PC-9 (cell line): ENCODE measurements at regions of chr6 and their contacts with region 1.

Region 1: GRCh38 chr6:21587179-21587924 is 6.2 kb upstream of the SOX4 start:
- DNase-seq: peak; percentile 66 to 67
- H3K4me3 ChIP-seq: peak overlapping the region; percentile 97
- H3K27ac ChIP-seq: peak overlapping the region; percentile 83
- H3K4me1 ChIP-seq: peaks cover 8% of the 10 kb centered on the region
- H3K27me3 ChIP-seq: no peaks in the 10 kb centered on the region
- CTCF ChIP-seq: no peak

Region 2: GRCh38 chr6:20877008-20877937 is 710.1 kb before region 1 on chr6:
- CTCF ChIA-PET with region 1: interaction called, 7 read pairs
- POLR2A ChIA-PET with region 1: interaction called, 21 read pairs
- intact Hi-C with region 1: loop called (anchors 1 kb)
- DNase-seq: peak; percentile 89 to 99
- H3K4me3 ChIP-seq: 0 out of 2 replicates have a peak overlapping the region, but pooled peaks have one; percentile 0
- H3K27ac ChIP-seq: peak overlapping the region; percentile 90
- H3K4me1 ChIP-seq: peaks cover 42% of the 10 kb centered on the region
- H3K27me3 ChIP-seq: no peaks in the 10 kb centered on the region
- CTCF ChIP-seq: no peak

Region 3: GRCh38 chr6:21220271-21220987 is 366.9 kb before region 1 on chr6:
- CTCF ChIA-PET with region 1: interaction called, 3 read pairs
- POLR2A ChIA-PET with region 1: interaction called, 10 read pairs
- intact Hi-C with region 1: loop called (anchors 1 kb)
- DNase-seq: peak; percentile 63 to 98
- H3K4me3 ChIP-seq: peak overlapping the region; percentile 28; the same call in 1 of the 2 replicates
- H3K27ac ChIP-seq: peak overlapping the region; percentile 95
- H3K4me1 ChIP-seq: peaks cover 30% of the 10 kb centered on the region
- H3K27me3 ChIP-seq: no peaks in the 10 kb centered on the region
- CTCF ChIP-seq: no peak

Region 4: DNA sequence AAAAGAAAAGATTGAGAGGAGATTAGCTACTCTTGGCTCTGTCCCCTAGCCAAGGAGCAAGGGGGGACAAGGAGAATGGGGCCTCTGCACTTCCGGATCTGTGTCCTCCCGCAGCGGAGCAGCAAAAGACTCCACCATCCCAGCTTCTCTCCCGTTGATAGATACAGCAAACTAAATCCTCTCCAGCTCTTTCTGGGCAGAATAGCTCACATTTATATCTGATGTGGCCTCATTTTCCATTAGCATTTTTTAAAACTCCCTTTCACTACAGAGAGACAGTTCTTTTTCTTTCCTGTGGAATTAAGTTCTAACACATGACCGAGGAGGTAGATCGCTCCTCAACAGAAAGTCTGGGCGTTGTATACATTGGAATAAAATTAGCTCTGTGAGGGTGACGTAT is 254.7 kb before region 1 on chr6:
- CTCF ChIA-PET with region 1: interaction called, 3 read pairs
- POLR2A ChIA-PET with region 1: interaction called, 31 read pairs
- intact Hi-C with region 1: no loop called
- DNase-seq: no peak
- H3K4me3 ChIP-seq: no peak overlapping the region
- H3K27ac ChIP-seq: no peak overlapping the region
- H3K4me1 ChIP-seq: 0 out of 2 replicates have a peak, but pooled peaks cover 4% of the 10 kb centered on the region
- H3K27me3 ChIP-seq: no peaks in the 10 kb centered on the region
- CTCF ChIP-seq: no peak

Region 5: DNA sequence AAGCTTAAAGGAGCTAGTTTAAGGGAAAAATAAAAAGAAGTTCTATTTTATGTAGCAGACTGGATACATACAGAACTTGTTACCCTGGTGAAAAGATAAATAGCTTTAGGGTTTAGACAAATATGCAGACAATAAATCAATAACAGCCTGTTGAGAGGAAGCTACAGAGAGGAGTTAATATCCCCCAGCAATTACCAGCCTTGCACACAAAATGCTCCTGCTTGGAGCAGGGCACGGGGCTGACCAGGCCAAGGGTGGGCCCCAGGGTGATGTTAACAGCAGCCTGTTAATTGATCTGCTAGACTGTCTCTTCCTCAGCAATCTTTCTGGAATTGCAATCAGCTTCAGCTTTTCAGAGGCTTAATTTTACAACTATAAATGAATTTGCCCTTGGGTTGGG is 118.9 kb before region 1 on chr6:
- CTCF ChIA-PET with region 1: no interaction called
- POLR2A ChIA-PET with region 1: no interaction called
- intact Hi-C with region 1: no loop called
- DNase-seq: no peak
- H3K4me3 ChIP-seq: no peak overlapping the region
- H3K27ac ChIP-seq: no peak overlapping the region
- H3K4me1 ChIP-seq: no peaks in the 10 kb centered on the region
- H3K27me3 ChIP-seq: no peaks in the 10 kb centered on the region
- CTCF ChIP-seq: no peak

Region 6: DNA sequence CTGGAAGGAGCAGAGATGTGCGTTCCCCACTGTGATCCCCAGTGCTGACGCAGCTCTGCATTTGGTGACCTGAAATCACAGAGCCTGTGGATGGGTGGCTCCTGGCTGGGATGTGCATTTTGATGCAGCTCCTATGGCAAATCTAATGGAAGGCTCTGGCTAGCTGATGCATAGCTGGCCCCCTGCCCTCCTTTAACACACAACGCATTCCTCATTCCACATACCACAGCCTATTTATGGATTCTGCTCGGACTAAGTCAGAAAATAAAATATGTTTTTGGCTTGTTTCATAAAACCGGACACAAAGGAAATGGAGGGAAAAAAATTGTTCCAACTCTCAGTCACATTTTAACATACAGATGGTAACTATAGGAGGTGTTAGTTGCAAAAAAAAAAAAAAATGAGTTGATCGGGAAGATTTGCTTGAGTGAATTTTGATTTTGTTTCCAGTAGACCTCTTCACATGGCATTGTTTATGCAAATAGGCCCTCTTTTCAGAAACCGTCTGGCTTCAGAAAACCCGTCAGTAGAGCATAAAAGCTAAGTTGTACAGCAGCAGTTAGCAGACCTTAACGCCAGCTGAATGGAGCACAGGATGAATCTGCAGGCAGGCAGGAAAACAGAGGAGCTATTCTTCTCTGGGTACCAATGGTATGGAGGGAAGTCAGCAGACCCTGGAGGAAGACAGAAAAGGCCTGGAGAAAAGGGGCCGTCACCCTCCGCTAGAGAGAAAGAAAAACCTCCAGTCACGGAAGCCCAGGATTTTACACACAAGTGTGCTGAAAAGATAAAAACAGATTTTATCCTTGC is 1197.5 kb after region 1 on chr6:
- CTCF ChIA-PET with region 1: interaction called, 14 read pairs
- POLR2A ChIA-PET with region 1: no interaction called
- intact Hi-C with region 1: no loop called
- DNase-seq: no peak
- H3K4me3 ChIP-seq: no peak overlapping the region
- H3K27ac ChIP-seq: no peak overlapping the region
- H3K4me1 ChIP-seq: no peaks in the 10 kb centered on the region
- H3K27me3 ChIP-seq: no peaks in the 10 kb centered on the region
- CTCF ChIP-seq: no peak